Caco-2 (cell line): ENCODE measurements at regions of chr20 and their contacts with region 1.

Region 1: GRCh38 chr20:43549416-43550065 is 9.3 kb upstream of the SGK2 start:
- DNase-seq: peak in 1 of 2 experiments; percentile 38
- H3K4me3 ChIP-seq: no peak overlapping the region
- H3K4me3 Mint-ChIP-seq: no peak overlapping the region
- H3K27ac Mint-ChIP-seq: no peak overlapping the region
- H3K4me1 ChIP-seq: no peaks in the 10 kb centered on the region
- H3K4me1 Mint-ChIP-seq: no peaks in the 10 kb centered on the region
- H3K27me3 ChIP-seq: no peaks in the 10 kb centered on the region
- H3K27me3 Mint-ChIP-seq: no peaks in the 10 kb centered on the region
- CTCF ChIP-seq: no peak

Region 2: DNA sequence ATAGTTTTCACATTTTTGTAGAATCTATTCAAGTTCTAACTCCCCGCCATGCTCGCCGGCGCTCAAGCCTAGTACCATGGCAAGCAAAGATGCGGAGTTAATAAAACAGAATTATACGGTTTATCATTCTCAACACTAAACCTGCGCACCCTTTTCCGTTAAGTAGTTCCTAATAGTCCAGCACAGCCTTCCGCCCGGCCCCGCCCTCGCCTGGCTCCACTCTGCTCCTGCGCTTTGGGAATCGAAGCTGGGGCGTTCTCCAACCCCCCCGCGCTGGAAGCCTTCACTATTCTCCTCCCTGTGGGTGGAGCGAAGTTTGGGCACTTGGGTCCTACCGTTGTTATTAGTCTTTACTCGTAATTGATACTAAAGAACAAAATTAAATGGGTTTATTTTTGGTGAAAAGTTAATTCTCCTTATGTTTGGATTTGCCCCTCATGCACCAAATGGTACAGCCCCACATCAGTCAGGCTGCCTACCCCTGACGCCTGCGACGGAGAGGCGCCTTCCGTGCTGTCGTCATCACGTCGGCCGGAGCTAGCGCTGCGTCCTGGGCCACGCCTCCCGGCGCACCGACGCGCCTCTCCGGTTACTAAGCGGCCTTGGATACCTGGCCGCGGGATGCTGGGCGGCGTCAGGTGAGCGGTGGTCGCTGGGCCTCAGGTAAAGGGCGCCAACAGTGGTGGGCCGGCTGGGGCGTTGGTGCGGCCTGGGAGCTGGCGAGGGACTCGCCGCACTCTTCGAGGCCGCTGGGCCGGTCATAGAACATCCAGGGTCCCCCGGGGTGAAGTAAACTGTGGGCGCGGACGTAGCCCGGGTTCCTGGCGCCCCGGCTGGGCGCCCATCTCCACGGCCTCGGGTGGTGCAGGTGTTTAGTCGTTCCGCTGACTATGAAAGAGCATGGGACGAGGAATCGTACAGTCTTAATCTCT is 41.1 kb after region 1 on chr20 and contains the start of gene IFT52:
- CTCF ChIA-PET with region 1: interaction called, 3 read pairs
- POLR2A ChIA-PET with region 1: interaction called, 11 read pairs
- intact Hi-C with region 1: no loop called
- DNase-seq: peak; percentile 98
- H3K4me3 ChIP-seq: peak within 1 kb of the TSS; percentile 72
- H3K4me3 Mint-ChIP-seq: peak within 1 kb of the TSS; percentile 86
- H3K27ac Mint-ChIP-seq: peak within 1 kb of the TSS; percentile 90
- H3K4me1 ChIP-seq: no peaks in the 10 kb centered on the region
- H3K4me1 Mint-ChIP-seq: peaks cover 15% of the 10 kb centered on the region
- H3K27me3 ChIP-seq: no peaks in the 10 kb centered on the region
- H3K27me3 Mint-ChIP-seq: no peaks in the 10 kb centered on the region
- CTCF ChIP-seq: peak in 1 of 2 experiments; percentile 17
- total RNA-seq, gene IFT52: 56.1 and 70.5 TPM in 2 replicates